ENCODE measurements at regions of chr14 and their contacts with region 1.

Region 1: DNA sequence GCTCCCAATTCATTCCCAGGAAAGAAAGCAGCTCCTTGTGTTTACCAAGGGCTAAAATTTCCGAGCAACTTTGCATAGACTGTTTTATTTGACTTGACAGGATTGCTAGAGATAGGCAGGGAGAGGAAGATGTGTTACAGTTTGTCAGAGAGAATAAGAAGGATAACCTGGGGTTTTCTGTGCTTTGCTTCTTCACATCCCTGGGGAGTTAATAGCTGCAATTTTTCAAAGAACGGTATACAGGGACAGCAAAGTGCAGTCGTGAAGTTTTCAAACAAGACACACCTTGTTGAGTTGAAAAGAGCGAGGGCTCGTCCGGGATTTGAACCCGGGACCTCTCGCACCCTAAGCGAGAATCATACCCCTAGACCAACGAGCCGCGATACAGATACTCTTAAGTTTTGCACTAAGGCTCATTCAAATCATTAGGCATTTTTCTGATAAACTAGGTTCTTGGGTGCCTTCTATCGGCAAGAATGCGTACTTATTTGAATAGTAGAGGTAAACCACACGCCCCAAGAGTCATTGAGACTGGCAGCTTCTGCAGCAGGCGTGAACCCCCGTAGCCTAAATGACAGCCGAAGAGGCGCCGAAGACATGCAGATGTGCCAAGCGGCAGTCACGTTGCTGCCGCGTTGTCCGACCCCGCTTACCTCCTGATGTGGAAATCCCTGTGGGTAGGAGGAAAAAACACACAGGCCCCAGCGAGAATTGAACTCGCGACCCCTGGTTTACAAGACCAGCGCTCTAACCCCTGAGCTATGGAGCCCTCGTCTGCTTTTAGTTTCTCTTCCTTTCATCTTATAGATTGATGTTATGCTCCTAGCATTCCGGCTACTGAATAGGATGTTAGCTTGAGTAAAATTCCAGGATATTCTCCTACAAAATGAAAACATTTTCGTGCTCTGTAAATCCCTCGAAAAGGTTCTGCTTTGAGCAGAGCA is 22.2 kb upstream of the RNASE12 start:
- DNase-seq: peak; percentile 88
- H3K4me3 ChIP-seq: peak overlapping the region; percentile 51 to 71
- H3K27ac ChIP-seq: peak overlapping the region; percentile 87 to 88
- H3K4me1 ChIP-seq: peaks cover 6% of the 10 kb centered on the region
- H3K27me3 ChIP-seq: no peaks in the 10 kb centered on the region
- CTCF ChIP-seq: peak; percentile 77 to 96 (median 90)
- POLR2A ChIP-seq: no peak

Region 2: GRCh38 chr14:20327005-20327869 is 286.1 kb before region 1 on chr14:
- intact Hi-C with region 1: loop called (anchors 10 kb)
- DNase-seq: no peak
- H3K4me3 ChIP-seq: no peak overlapping the region
- H3K27ac ChIP-seq: peak overlapping the region in 1 of 2 donors; percentile 48
- H3K4me1 ChIP-seq: no peaks in the 10 kb centered on the region
- H3K27me3 ChIP-seq: no peaks in the 10 kb centered on the region
- CTCF ChIP-seq: peak; percentile 67 to 81 (median 72)
- POLR2A ChIP-seq: no peak

Region 3: DNA sequence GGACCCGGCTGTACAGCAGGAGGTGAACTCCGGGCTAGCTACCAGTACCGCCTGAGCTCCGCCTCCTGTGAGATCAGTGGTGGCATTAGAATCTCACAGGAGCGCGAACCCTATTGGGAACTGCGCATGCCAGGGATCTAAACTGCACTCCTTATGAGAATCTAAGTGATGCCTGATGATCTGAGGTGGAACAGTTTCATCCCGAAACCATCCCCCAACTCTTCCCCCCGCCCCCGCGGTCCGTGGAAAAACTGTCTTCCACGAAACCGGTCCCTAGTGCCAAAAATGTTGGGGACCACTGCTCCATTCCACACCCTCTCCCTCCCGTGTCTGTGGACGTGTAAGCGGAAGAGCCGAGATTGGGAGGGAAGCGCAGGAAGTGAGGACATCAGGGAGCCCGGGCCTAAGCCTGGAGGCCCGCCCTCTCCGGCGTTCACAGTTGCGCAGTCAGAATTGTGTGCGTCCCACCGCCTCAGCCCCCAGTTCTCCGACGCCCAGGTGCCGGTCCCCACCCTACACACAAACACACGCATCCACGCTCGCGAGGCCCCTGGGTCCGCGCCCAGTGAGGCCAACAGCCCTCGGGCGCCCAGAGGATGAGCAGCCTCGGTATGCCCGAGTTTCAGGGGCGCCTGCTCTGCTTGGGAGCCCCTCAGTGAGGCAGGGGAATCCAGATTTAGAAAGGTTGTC is 69.2 kb after region 1 on chr14:
- intact Hi-C with region 1: loop called (anchors 5 kb)
- DNase-seq: peak; percentile 94
- H3K4me3 ChIP-seq: peak overlapping the region; percentile 86 to 94
- H3K27ac ChIP-seq: peak overlapping the region; percentile 100
- H3K4me1 ChIP-seq: peaks cover 10% of the 10 kb centered on the region
- H3K27me3 ChIP-seq: no peaks in the 10 kb centered on the region
- CTCF ChIP-seq: no peak
- POLR2A ChIP-seq: peak; percentile 92

Region 4: DNA sequence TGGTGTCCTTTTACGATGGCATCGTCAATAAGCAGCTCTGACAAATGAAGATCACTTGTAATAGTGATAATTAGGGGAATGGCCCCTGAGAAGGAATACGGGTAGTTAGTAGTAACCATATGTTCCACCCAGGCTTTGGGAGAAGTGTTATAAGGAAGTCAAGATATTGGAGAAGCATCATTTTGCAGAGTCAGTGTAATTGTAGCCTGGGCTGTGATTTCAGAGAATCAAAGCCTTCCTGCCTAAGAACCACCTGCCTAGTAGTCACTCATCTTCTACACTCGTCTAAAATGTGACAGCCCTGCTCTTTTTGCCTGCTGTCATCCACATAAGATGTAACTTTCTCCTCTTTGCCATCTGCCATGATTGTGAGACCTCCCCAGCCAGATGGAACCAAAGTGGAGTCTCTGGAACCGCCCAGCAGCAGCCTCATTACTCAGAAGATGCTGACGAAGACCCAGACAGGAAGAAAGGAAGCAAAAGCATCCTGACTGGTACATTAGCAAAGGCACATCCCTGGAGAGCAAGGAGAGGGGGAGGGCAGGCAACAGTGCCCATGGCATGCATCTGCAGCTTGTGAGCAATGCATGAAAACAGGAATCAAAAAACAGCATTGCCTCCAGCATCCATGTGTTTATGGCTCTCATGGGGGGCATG is 119.7 kb after region 1 on chr14:
- intact Hi-C with region 1: no loop called
- DNase-seq: no peak
- H3K4me3 ChIP-seq: no peak overlapping the region
- H3K27ac ChIP-seq: peak overlapping the region in 1 of 2 donors; percentile 2
- H3K4me1 ChIP-seq: no peaks in the 10 kb centered on the region
- H3K27me3 ChIP-seq: no peaks in the 10 kb centered on the region
- CTCF ChIP-seq: no peak
- POLR2A ChIP-seq: no peak

Measured in testis (tissue), 5 donors.